ENCODE measurements at regions of chr3 and their contacts with region 1.

Region 1: DNA sequence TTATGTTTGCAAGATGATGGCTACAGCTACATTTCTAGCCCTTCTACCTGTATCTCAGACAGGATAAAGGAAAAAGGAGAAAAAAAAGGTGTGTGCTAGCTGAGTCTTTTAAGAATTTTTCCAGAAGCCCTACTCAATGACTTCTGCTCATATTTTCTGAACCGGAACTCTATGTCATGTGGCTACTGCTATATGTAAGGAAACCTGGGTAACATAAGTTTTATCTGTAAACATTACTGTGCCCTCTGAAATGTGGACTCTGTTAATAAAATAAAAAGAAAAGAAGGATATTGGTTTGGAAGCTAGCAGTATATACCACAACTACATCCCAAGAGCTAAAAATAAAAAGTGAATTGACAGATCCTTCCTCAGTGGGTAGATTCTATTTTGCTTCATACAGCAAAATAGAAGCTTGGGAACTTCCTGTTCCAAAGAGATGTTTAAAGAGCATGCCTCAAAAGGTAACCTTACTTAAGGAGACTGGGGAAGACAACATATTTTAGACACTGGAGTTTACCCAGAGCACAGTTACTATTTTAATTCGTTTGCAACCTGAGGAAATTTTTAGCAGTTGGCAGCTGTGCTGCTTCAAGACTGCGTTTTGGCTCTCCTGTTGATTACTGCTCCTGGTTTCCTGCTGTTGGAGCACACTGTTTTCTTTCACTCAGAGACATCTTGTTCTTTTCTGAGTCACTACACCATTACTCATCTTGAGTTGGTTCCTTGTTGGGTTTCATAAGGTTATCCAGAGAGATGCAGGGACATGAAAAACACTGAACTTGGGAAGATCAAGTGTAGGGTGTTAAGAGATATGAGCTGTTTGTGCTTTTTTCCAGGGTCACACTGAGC is 280.7 kb downstream of the NFKBIZ start:
- DNase-seq: peak; percentile 84
- ATAC-seq: peak; percentile 81
- H3K4me3 ChIP-seq: no peak overlapping the region
- H3K27ac ChIP-seq: peak overlapping the region; percentile 89
- H3K4me1 ChIP-seq: peaks cover 31% of the 10 kb centered on the region
- H3K27me3 ChIP-seq: no peaks in the 10 kb centered on the region
- CTCF ChIP-seq: no peak

Region 2: GRCh38 chr3:101709126-101709525 is 420.9 kb before region 1 on chr3:
- CTCF ChIA-PET with region 1: no interaction called
- POLR2A ChIA-PET with region 1: no interaction called
- intact Hi-C with region 1: no loop called
- DNase-seq: no peak
- ATAC-seq: no peak
- H3K4me3 ChIP-seq: no peak overlapping the region
- H3K27ac ChIP-seq: no peak overlapping the region
- H3K4me1 ChIP-seq: no peaks in the 10 kb centered on the region
- H3K27me3 ChIP-seq: no peaks in the 10 kb centered on the region
- CTCF ChIP-seq: no peak

Region 3: GRCh38 chr3:101861212-101861788 is 268.7 kb before region 1 on chr3:
- CTCF ChIA-PET with region 1: no interaction called
- POLR2A ChIA-PET with region 1: no interaction called
- intact Hi-C with region 1: loop called (anchors 5 kb)
- DNase-seq: no peak
- ATAC-seq: no peak
- H3K4me3 ChIP-seq: no peak overlapping the region
- H3K27ac ChIP-seq: peak overlapping the region; percentile 10; the same call in 1 of the 2 replicates
- H3K4me1 ChIP-seq: peaks cover 12% of the 10 kb centered on the region
- H3K27me3 ChIP-seq: no peaks in the 10 kb centered on the region
- CTCF ChIP-seq: no peak

Region 4: DNA sequence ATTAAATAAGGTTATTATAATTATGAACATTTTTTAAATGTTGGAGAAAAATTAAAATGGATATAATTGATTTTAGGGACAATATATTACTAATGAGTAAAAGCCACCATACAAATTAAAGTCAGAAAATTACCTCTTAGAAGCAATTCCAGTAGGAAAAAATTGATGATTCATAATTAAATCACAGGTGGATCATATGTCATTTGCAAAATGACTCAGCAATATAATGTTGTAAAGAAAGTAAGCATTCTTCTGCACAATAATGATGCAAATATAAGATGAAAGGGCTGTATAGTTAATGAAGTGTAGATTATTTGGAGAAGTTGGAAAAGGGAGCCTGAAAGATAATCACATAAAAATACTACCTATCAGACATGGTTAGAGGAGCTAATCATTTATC is 330.6 kb after region 1 on chr3:
- CTCF ChIA-PET with region 1: no interaction called
- POLR2A ChIA-PET with region 1: no interaction called
- intact Hi-C with region 1: no loop called
- DNase-seq: peak; percentile 86
- ATAC-seq: peak; percentile 90
- H3K4me3 ChIP-seq: no peak overlapping the region
- H3K27ac ChIP-seq: peak overlapping the region; percentile 26
- H3K4me1 ChIP-seq: peaks cover 24% of the 10 kb centered on the region
- H3K27me3 ChIP-seq: no peaks in the 10 kb centered on the region
- CTCF ChIP-seq: no peak

Region 5: GRCh38 chr3:103002425-103003176 is 872.6 kb after region 1 on chr3:
- CTCF ChIA-PET with region 1: no interaction called
- POLR2A ChIA-PET with region 1: no interaction called
- intact Hi-C with region 1: no loop called
- DNase-seq: no peak
- ATAC-seq: no peak
- H3K4me3 ChIP-seq: no peak overlapping the region
- H3K27ac ChIP-seq: no peak overlapping the region
- H3K4me1 ChIP-seq: no peaks in the 10 kb centered on the region
- H3K27me3 ChIP-seq: no peaks in the 10 kb centered on the region
- CTCF ChIP-seq: no peak

Measured in PC-3 (cell line).